AG04449 (cell line): ENCODE measurements at regions of chr2 and their contacts with region 1.

Region 1: DNA sequence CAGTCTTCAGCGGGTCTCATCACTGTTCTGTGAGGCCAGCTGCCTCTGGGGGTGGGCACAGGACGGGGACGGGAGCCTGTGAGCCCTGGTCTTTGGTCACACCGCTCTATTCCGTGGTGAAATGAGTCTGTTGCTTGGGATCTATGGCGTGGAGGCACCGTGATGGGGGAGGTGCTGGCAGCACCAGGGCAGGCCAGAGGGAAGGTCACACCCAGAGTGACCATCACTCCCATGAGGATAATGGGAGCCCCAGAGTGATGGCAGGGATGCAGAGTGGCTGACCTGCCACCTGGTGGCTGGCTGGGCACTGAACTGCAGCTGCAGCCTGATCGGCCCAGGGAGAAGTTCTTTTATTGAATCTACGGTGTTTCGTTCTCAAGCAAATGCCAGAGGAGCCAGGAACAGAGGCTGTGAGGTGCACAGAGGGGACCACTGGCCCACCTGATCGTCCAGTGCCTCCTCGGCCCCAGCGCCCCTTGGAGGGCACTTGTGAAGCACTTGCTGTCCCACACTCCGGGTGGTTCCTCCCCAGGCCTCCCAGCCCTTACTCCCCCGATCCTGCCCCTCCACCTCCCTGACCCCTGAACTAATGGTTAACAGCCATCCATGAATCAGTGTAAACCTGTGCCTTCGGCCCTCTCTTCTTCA is 17.9 kb downstream of the KCNIP3 start:
- DNase-seq: no peak
- H3K4me3 ChIP-seq: no peak overlapping the region
- CTCF ChIP-seq: peak; percentile 66

Region 2: DNA sequence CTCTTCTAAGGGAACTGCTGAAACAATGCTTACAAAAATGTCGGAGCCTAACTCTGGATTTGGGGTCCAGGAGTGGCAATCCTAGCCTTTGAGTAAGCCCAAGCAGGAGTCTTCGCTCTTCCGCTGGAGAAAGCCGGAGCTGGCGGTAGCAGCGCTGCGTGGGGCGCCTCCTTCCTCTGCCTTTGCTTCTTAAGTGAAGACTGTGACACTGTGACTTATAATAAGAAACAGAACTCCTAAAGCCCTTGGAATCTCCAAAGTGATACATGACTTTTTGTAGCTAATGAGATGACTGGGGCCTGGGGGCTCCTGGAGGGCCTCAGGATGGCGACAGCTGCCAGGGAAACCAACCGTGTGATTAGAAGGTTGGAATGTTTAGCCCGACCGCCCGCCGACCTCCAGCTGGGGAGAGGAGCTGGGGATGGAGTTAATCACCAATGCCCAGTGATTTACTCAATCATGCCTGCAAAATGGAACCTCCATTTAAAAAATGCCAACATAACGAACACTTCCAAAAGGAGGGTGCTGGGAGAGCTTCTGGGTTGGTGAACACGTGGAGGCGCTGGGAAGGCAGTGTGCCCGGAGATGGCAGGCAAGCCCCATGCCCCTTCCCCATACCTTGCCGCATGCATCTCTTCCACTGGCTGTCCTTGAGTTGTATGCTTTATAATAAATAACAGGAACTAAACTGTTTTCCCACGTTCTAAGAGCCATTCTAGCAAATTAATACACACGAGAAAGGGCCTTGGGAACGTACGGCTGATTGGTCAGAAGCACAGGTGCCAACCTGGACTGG is 318.6 kb before region 1 on chr2:
- CTCF ChIA-PET with region 1: no interaction called
- POLR2A ChIA-PET with region 1: no interaction called
- DNase-seq: no peak
- H3K4me3 ChIP-seq: no peak overlapping the region
- CTCF ChIP-seq: no peak

Region 3: GRCh38 chr2:95231723-95232122 is 83.4 kb before region 1 on chr2:
- CTCF ChIA-PET with region 1: interaction called, 50 read pairs
- POLR2A ChIA-PET with region 1: no interaction called
- DNase-seq: no peak
- H3K4me3 ChIP-seq: no peak overlapping the region
- CTCF ChIP-seq: peak; percentile 60